Activated T-helper 2 cell treated with anti-CD3 and anti-CD28 coated beads, Interferon-gamma antibody, Interleukin-2, Interleukin-4, amounts not matched to agents 10 μg/mL and 5 μg/mL and 100 μg/mL, durations not matched to agents 14 hours and 24 hours and 36 hours (primary cell): ENCODE measurements at regions of chr1 and their contacts with region 1.

Region 1: GRCh38 chr1:172429331-172430127 is 9.0 kb downstream of the C1orf105 start:
- DNase-seq: no peak
- H3K4me3 Mint-ChIP-seq: no peak overlapping the region
- H3K27ac Mint-ChIP-seq: no peak overlapping the region
- H3K4me1 Mint-ChIP-seq: peaks cover 23% of the 10 kb centered on the region
- H3K27me3 Mint-ChIP-seq: no peaks in the 10 kb centered on the region

Region 2: DNA sequence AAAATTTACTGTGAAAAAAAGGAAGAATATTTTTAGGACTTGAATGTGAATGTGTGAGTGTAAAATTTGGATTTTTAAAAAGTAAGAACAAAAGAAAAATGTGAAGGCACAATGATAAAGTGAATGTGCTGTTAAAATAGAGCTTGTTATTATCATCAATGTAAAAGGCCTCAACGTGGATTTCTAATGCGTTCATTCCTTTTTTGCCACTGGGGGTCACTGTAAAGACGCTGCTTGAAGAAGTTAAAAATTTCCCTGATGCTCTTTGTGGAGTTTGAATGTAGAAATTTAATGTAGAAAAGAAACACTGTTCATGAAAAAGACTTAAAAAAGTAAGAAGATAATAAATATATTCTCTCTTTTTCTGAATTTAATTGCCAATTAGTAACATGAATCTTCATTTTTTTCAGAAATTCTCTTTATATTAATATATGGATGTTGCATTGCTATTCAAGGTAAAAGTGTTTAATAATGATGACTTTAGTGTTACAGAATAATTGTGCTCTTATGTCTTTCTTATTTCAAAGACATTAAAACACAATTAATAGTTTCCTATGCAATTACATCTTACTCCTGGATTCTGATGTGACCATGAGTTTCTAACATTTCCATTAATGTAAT is 426.7 kb before region 1 on chr1:
- intact Hi-C with region 1: loop called (anchors 5 kb)
- DNase-seq: no peak
- H3K4me3 Mint-ChIP-seq: no peak overlapping the region
- H3K27ac Mint-ChIP-seq: no peak overlapping the region
- H3K4me1 Mint-ChIP-seq: no peaks in the 10 kb centered on the region
- H3K27me3 Mint-ChIP-seq: no peaks in the 10 kb centered on the region

Region 3: GRCh38 chr1:172089768-172090510 is 339.6 kb before region 1 on chr1:
- intact Hi-C with region 1: loop called (anchors 1 kb)
- DNase-seq: peak; percentile 27
- H3K4me3 Mint-ChIP-seq: no peak overlapping the region
- H3K27ac Mint-ChIP-seq: no peak overlapping the region
- H3K4me1 Mint-ChIP-seq: peaks cover 7% of the 10 kb centered on the region
- H3K27me3 Mint-ChIP-seq: peaks cover 7% of the 10 kb centered on the region

Region 4: DNA sequence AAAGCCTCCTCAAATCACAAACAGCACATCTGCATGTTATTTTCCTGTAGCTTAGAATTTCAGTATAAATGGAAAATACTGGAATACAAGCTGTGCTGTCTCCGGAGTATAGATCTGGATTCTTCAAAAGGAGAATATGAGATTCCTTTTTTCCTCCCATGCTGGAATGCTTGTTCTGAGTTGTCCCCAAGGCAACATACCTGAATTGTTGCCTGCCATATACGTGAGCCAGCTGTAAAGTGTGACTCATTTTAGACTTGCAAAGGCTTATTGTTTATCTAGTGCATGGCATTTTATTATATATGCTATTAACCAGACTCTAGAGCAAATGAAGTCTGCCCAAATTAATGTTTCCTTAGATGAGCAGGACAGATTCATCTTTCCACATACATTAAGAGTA is 104.0 kb before region 1 on chr1:
- intact Hi-C with region 1: no loop called
- DNase-seq: no peak
- H3K4me3 Mint-ChIP-seq: no peak overlapping the region
- H3K27ac Mint-ChIP-seq: no peak overlapping the region
- H3K4me1 Mint-ChIP-seq: no peaks in the 10 kb centered on the region
- H3K27me3 Mint-ChIP-seq: no peaks in the 10 kb centered on the region

Region 5: DNA sequence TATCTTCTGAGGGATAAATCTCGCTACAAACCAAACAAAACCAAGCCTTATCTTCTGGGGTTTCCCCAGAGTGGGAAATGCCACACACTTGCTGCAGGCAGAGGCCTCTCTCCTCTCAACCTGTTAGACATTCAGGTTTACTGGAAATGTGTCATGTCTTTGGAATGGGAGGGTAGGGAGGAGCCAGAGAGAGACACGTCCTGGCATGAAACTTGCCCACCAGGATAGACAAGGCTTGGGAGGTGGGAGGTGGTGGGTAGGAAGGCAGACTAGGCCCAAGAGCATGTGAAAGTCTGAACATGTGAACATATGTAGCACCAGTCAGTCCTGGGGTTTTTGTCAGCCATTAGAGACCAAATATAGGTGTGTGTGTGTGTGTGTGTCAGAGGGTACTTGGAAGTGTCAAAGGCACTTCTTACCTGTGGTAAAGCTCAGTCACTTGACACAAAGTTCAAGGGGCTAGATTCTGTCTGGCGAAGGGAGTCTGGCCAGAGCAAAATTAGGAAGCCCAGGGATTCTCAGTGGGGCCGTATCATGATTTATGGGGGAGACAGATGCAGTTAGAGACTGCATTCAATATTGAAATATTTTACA is 46.8 kb after region 1 on chr1:
- intact Hi-C with region 1: no loop called
- DNase-seq: no peak
- H3K4me3 Mint-ChIP-seq: no peak overlapping the region
- H3K27ac Mint-ChIP-seq: no peak overlapping the region
- H3K4me1 Mint-ChIP-seq: peaks cover 3% of the 10 kb centered on the region
- H3K27me3 Mint-ChIP-seq: peaks cover 9% of the 10 kb centered on the region

Region 6: GRCh38 chr1:172679000-172679772 is 249.7 kb after region 1 on chr1:
- intact Hi-C with region 1: no loop called
- DNase-seq: no peak
- H3K4me3 Mint-ChIP-seq: no peak overlapping the region
- H3K27ac Mint-ChIP-seq: peak overlapping the region; percentile 60
- H3K4me1 Mint-ChIP-seq: peaks cover 54% of the 10 kb centered on the region
- H3K27me3 Mint-ChIP-seq: peaks cover 2% of the 10 kb centered on the region